ENCODE measurements at regions of chr7 and their contacts with region 1.

Region 1: GRCh38 chr7:32846701-32847100 is 44.9 kb downstream of the KBTBD2 start:
- DNase-seq: peak; percentile 89 to 98
- H3K4me3 ChIP-seq: no peak overlapping the region
- CTCF ChIP-seq: peak in 1 of 3 donors; percentile 63
- POLR2A ChIP-seq: no peak

Region 2: DNA sequence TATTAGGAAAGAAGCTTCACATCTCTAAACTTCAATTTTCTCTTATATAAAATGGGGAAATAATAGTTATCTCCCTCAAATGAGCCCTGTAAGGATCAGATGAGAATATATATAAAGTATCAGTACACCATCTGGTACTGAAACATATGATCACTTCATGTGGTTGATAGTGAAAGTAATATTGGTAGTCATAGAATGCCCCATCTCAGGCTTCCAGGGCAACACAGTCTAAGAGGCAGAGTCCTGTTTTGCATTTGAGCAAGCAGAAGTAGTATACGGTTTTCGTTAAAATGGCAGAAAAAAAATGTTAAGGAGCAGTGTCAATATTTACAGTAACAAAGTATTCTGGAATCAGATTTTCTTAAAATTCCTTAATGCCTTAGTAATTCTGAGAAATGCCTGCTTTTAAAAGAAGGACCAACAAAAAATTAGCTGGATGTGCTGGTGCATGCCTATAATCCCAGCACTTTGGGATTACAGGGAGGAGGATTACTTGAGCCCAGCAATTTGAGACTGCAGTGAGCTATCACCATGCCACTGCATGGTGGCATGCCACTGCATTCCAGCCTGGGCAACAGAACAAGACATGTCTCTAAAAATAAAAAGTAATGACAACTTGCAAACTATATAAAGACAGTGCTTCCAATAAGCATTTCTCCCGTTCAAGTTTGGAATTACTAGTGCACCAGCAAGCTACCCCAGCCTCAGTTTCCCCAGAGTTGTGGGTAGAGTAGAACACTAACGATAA is 25.1 kb after region 1 on chr7:
- intact Hi-C with region 1: loop called (anchors 1 kb)
- DNase-seq: no peak
- H3K4me3 ChIP-seq: no peak overlapping the region
- CTCF ChIP-seq: no peak
- POLR2A ChIP-seq: no peak

Region 3: DNA sequence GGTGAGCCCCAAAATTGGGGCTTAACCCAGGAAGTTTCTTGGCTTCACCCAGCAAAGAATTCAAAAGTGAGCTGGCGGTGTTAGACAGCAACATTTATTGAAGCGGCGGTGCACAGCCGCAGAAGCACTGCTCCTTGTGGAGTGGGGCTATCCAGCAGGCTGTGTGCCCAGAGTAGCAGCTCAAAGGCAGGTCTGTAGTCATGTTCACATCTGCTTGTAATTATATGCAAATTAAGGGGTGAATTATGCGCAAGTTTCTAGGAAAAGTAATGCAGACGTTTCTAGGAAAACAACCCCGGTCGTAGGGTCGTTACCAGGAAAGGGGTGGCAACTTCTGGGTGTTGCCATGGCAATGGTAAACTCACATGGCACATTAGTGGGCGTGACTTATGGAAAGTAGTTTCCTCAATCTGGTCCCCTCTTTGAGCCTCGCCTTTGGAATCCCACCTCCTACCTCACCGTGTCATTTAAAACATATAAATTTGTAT is 58.5 kb after region 1 on chr7:
- intact Hi-C with region 1: no loop called
- DNase-seq: no peak
- H3K4me3 ChIP-seq: no peak overlapping the region
- CTCF ChIP-seq: no peak
- POLR2A ChIP-seq: no peak

Measured in lower leg skin (tissue), 4 donors.